Activated CD4-positive, alpha-beta T cell treated with anti-CD3 and anti-CD28 coated beads, Interleukin-2, amount 10 ng/mL, durations not matched to agents 7 days and 5 days (primary cell): ENCODE measurements at regions of chr15 and their contacts with region 1.

Region 1: GRCh38 chr15:81265944-81266775 is 57.8 kb downstream of the STARD5 start:
- DNase-seq: peak; percentile 88
- H3K4me3 Mint-ChIP-seq: peak overlapping the region; percentile 50
- H3K27ac Mint-ChIP-seq: peak overlapping the region; percentile 79
- H3K4me1 Mint-ChIP-seq: peaks cover 46% of the 10 kb centered on the region
- H3K27me3 Mint-ChIP-seq: peaks cover 7% of the 10 kb centered on the region

Region 2: GRCh38 chr15:81098861-81099651 is 167.1 kb before region 1 on chr15:
- CTCF ChIA-PET with region 1: interaction called, 11 read pairs
- POLR2A ChIA-PET with region 1: no interaction called
- DNase-seq: no peak
- H3K4me3 Mint-ChIP-seq: no peak overlapping the region
- H3K27ac Mint-ChIP-seq: no peak overlapping the region
- H3K4me1 Mint-ChIP-seq: peaks cover 15% of the 10 kb centered on the region
- H3K27me3 Mint-ChIP-seq: peaks cover 18% of the 10 kb centered on the region

Region 3: DNA sequence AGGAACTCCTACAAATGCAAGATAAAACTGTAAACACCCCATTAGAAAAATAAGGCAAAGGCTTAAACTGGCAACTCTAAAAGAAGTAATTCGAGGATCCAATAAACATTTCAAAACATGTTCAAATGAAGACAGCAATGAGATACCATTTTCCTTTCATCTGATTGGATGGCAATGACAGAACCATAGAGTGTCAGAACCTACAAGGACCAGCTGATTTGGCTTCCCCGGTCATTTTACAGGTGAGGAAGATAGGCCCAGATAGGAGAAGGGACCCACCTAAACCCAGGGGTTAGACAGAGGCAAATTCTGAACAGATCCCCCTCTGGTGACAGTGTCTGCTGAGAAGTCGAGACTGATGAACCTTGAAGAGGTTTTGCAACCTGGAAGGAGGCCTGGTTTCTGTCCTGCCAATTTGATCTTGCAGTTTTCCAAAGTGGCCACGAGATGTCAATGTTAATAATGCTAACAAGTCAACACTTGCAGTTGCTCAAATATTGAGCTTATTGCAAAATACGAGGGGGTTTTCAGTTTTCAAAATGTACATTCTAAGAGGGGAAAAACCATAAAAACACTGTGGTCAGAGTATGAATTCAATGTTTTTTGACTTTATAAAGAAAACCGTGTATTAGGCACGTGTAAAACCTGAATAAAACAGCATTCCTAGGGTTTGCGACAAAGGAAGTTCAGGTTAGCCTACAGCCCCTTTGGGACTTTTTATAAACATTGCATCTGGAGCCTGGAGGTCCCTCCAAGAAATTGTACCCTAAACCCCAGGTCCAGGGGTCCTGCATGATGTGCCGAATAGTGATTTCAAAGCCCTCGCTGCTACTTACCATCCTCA is 110.6 kb before region 1 on chr15:
- CTCF ChIA-PET with region 1: interaction called, 19 read pairs
- POLR2A ChIA-PET with region 1: interaction called, 6 read pairs
- DNase-seq: peak; percentile 30
- H3K4me3 Mint-ChIP-seq: no peak overlapping the region
- H3K27ac Mint-ChIP-seq: no peak overlapping the region
- H3K4me1 Mint-ChIP-seq: peaks cover 2% of the 10 kb centered on the region
- H3K27me3 Mint-ChIP-seq: peaks cover 8% of the 10 kb centered on the region

Region 4: GRCh38 chr15:81174792-81175327 is 91.3 kb before region 1 on chr15:
- CTCF ChIA-PET with region 1: interaction called, 14 read pairs
- POLR2A ChIA-PET with region 1: no interaction called
- DNase-seq: no peak
- H3K4me3 Mint-ChIP-seq: no peak overlapping the region
- H3K27ac Mint-ChIP-seq: no peak overlapping the region
- H3K4me1 Mint-ChIP-seq: no peaks in the 10 kb centered on the region
- H3K27me3 Mint-ChIP-seq: peaks cover 23% of the 10 kb centered on the region

Region 5: GRCh38 chr15:81280721-81281455 is 14.7 kb after region 1 on chr15:
- CTCF ChIA-PET with region 1: interaction called, 23 read pairs
- POLR2A ChIA-PET with region 1: no interaction called
- DNase-seq: no peak
- H3K4me3 Mint-ChIP-seq: no peak overlapping the region
- H3K27ac Mint-ChIP-seq: peak overlapping the region; percentile 5
- H3K4me1 Mint-ChIP-seq: peaks cover 37% of the 10 kb centered on the region
- H3K27me3 Mint-ChIP-seq: no peaks in the 10 kb centered on the region

Region 6: DNA sequence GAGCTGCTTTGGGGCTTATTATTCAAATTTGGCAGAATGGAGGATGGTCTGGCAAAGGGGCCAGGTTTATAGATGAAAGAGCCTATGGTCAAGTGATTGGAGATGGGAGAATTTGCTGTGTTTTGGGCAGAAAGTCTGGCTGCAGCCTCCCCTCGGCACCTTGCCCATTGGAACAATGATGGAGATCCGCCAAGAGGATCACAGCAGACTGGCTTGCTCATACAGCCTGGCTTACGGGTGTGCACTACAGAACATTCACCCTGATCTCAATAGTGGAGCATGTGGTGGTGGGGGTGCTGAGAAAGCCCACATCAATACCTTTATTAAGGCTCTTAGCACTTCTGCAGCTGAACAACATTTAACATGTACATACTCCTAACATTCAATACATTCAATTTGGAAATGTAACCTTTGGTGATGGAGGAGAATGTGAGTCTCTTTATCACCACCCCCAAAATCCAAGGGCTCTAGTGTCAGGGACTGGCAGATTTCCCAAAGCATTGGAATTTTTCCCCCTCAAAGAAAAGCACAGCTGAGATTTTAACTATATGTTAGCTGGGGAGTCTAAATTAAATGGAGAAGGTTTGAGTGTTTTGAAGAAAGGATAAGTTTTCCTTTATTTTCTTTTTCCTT is 226.3 kb after region 1 on chr15:
- CTCF ChIA-PET with region 1: no interaction called
- POLR2A ChIA-PET with region 1: no interaction called
- DNase-seq: no peak
- H3K4me3 Mint-ChIP-seq: no peak overlapping the region
- H3K27ac Mint-ChIP-seq: no peak overlapping the region
- H3K4me1 Mint-ChIP-seq: no peaks in the 10 kb centered on the region
- H3K27me3 Mint-ChIP-seq: peaks cover 4% of the 10 kb centered on the region